Activated CD4-positive, alpha-beta T cell treated with anti-CD3 and anti-CD28 coated beads for 36 hours (primary cell): ENCODE measurements at regions of chr3 and their contacts with region 1.

Region 1: GRCh38 chr3:102229062-102229655 is 205.7 kb upstream of the ZPLD1 start:
- DNase-seq: peak; percentile 82
- ATAC-seq: peak; percentile 71
- H3K4me3 Mint-ChIP-seq: no peak overlapping the region
- H3K27ac Mint-ChIP-seq: no peak overlapping the region
- H3K4me1 Mint-ChIP-seq: peaks cover 14% of the 10 kb centered on the region
- H3K27me3 Mint-ChIP-seq: peaks cover 1% of the 10 kb centered on the region

Region 2: GRCh38 chr3:100730524-100730923 is 1498.6 kb before region 1 on chr3:
- CTCF ChIA-PET with region 1: no interaction called
- POLR2A ChIA-PET with region 1: no interaction called
- intact Hi-C with region 1: no loop called
- DNase-seq: no peak
- ATAC-seq: no peak
- H3K4me3 Mint-ChIP-seq: no peak overlapping the region
- H3K27ac Mint-ChIP-seq: no peak overlapping the region
- H3K4me1 Mint-ChIP-seq: peaks cover 16% of the 10 kb centered on the region
- H3K27me3 Mint-ChIP-seq: no peaks in the 10 kb centered on the region

Region 3: DNA sequence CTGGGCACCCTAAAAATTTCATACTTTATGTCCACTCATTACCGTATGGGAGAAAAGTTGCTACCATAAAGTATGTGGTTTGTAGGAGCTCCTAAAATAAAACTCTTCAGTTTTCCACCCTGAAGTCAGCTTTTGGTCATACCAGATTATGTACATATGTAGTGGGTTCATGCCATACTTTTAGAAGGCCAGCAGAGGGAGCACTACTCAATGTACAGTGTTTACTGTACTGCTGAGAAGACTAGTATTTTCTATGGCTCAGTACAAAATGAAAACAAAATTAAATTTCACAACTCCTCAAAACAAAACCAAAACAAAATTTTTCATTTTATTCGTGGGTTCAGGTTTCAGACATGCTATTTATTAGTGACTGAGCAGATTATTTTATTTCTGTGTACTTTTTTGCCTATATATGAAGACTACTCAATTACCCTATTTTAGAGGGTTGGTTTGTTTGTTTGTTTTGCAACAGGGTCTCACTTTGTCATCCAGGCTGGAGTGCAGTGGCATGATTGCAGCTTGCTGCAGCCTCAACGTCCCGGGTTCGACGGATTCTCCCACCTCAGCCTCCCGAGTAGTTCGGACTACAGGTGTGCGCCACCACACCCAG is 425.9 kb before region 1 on chr3:
- CTCF ChIA-PET with region 1: interaction called, 115 read pairs
- POLR2A ChIA-PET with region 1: no interaction called
- intact Hi-C with region 1: no loop called
- DNase-seq: peak; percentile 68
- ATAC-seq: peak; percentile 99
- H3K4me3 Mint-ChIP-seq: no peak overlapping the region
- H3K27ac Mint-ChIP-seq: no peak overlapping the region
- H3K4me1 Mint-ChIP-seq: peaks cover 36% of the 10 kb centered on the region
- H3K27me3 Mint-ChIP-seq: no peaks in the 10 kb centered on the region

Region 4: GRCh38 chr3:101819758-101820157 is 409.4 kb before region 1 on chr3:
- CTCF ChIA-PET with region 1: interaction called, 115 read pairs
- POLR2A ChIA-PET with region 1: no interaction called
- intact Hi-C with region 1: no loop called
- DNase-seq: no peak
- ATAC-seq: peak; percentile 67
- H3K4me3 Mint-ChIP-seq: no peak overlapping the region
- H3K27ac Mint-ChIP-seq: no peak overlapping the region
- H3K4me1 Mint-ChIP-seq: peaks cover 45% of the 10 kb centered on the region
- H3K27me3 Mint-ChIP-seq: no peaks in the 10 kb centered on the region

Region 5: GRCh38 chr3:101936419-101937356 is 292.5 kb before region 1 on chr3:
- CTCF ChIA-PET with region 1: interaction called, 3 read pairs
- POLR2A ChIA-PET with region 1: no interaction called
- intact Hi-C with region 1: loop called in 1 of 2 experiments (anchors 10 kb)
- DNase-seq: peak; percentile 42
- ATAC-seq: peak; percentile 88
- H3K4me3 Mint-ChIP-seq: no peak overlapping the region
- H3K27ac Mint-ChIP-seq: peak overlapping the region; percentile 77
- H3K4me1 Mint-ChIP-seq: peaks cover 27% of the 10 kb centered on the region
- H3K27me3 Mint-ChIP-seq: peaks cover 8% of the 10 kb centered on the region

Region 6: DNA sequence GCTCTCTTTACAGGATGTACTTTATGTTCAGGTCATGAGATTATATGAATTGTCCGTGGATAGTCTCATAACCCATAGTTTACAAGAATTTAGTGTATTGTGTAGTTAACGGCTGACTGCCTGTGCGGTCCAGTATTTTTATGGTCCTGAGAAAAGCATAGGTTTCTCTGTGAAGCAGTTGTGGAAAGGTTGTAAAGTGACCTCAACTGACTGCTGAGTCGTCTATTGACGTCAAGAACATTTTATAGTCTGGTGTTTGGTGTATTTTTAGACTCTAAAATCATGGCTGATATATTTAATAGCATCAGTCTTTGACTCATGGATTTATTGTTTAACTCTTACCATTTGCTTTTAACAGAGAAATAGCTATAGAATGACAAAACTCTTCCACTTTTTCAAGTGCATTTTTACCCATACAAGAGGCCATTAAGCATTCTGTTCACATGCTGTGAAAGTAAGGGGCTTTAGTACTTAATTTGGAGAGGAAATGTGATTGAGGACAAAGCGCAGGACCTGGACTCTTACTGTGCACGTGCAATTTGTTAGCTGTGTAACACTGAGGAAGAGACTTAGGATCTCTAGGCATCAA is 139.2 kb before region 1 on chr3:
- CTCF ChIA-PET with region 1: interaction called, 6 read pairs
- POLR2A ChIA-PET with region 1: no interaction called
- intact Hi-C with region 1: loop called in 1 of 2 experiments (anchors 5 kb)
- DNase-seq: no peak
- ATAC-seq: no peak
- H3K4me3 Mint-ChIP-seq: no peak overlapping the region
- H3K27ac Mint-ChIP-seq: no peak overlapping the region
- H3K4me1 Mint-ChIP-seq: peaks cover 45% of the 10 kb centered on the region
- H3K27me3 Mint-ChIP-seq: peaks cover 5% of the 10 kb centered on the region

Region 7: GRCh38 chr3:102180291-102181039 is 48.7 kb before region 1 on chr3:
- CTCF ChIA-PET with region 1: interaction called, 11 read pairs
- POLR2A ChIA-PET with region 1: no interaction called
- intact Hi-C with region 1: no loop called
- DNase-seq: no peak
- ATAC-seq: peak; percentile 51
- H3K4me3 Mint-ChIP-seq: no peak overlapping the region
- H3K27ac Mint-ChIP-seq: no peak overlapping the region
- H3K4me1 Mint-ChIP-seq: peaks cover 5% of the 10 kb centered on the region
- H3K27me3 Mint-ChIP-seq: peaks cover 1% of the 10 kb centered on the region

Region 8: GRCh38 chr3:102536456-102536855 is 307.3 kb after region 1 on chr3:
- CTCF ChIA-PET with region 1: interaction called, 99 read pairs
- POLR2A ChIA-PET with region 1: no interaction called
- intact Hi-C with region 1: no loop called
- DNase-seq: no peak
- ATAC-seq: no peak
- H3K4me3 Mint-ChIP-seq: no peak overlapping the region
- H3K27ac Mint-ChIP-seq: no peak overlapping the region
- H3K4me1 Mint-ChIP-seq: no peaks in the 10 kb centered on the region
- H3K27me3 Mint-ChIP-seq: peaks cover 6% of the 10 kb centered on the region